MCF 10A (cell line): ENCODE measurements at regions of chr1 and their contacts with region 1.

Region 1: GRCh38 chr1:178532392-178532791 is 19.5 kb downstream of the TEX35 start:
- DNase-seq: peak; percentile 88
- H3K4me3 Mint-ChIP-seq: no peak overlapping the region
- H3K27ac Mint-ChIP-seq: no peak overlapping the region
- H3K4me1 Mint-ChIP-seq: peaks cover 36% of the 10 kb centered on the region
- H3K27me3 Mint-ChIP-seq: peaks cover 7% of the 10 kb centered on the region
- CTCF ChIP-seq: peak; percentile 99

Region 2: GRCh38 chr1:178434360-178434759 is 98.0 kb before region 1 on chr1:
- CTCF ChIA-PET with region 1: no interaction called
- POLR2A ChIA-PET with region 1: no interaction called
- intact Hi-C with region 1: no loop called
- DNase-seq: no peak
- H3K4me3 Mint-ChIP-seq: no peak overlapping the region
- H3K27ac Mint-ChIP-seq: no peak overlapping the region
- H3K4me1 Mint-ChIP-seq: peaks cover 6% of the 10 kb centered on the region
- H3K27me3 Mint-ChIP-seq: no peaks in the 10 kb centered on the region
- CTCF ChIP-seq: no peak

Region 3: DNA sequence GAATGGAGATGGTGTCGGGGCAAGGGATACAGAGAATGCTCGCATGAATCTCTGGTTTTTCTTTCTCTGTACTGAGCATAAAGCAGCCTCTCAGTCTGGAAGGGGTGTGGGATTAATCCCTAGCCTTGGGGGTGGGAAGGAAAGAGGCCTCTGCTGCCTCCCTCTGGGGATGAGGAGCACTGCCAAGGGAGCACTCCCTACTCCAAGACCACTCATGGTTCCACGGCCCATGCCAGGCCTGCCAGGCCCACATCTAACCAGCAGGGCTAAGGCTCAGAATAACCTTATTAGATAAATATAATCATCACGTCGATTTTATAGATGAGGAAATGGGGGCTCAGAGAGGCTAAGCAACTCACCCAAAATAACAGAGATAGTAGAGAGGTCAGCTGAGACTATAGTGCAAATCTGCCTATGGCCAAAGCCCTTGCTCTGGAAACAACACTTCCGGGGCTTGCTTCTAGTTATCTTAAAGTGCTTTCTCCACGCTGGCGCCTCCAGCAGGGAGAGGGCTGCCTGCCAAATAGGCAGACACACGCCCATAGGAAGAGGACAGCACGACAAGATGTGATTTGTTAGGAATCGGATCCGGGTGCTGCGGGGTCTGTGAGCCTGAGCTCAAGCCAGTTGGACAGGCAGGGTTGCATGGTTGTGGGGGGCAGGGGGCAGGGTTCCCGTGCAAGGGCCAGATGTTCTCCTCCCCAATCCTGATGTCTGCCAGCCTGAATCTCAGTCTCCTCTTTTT is 18.9 kb before region 1 on chr1:
- CTCF ChIA-PET with region 1: interaction called, 120 read pairs
- POLR2A ChIA-PET with region 1: no interaction called
- intact Hi-C with region 1: no loop called
- DNase-seq: no peak
- H3K4me3 Mint-ChIP-seq: no peak overlapping the region
- H3K27ac Mint-ChIP-seq: no peak overlapping the region
- H3K4me1 Mint-ChIP-seq: no peaks in the 10 kb centered on the region
- H3K27me3 Mint-ChIP-seq: no peaks in the 10 kb centered on the region
- CTCF ChIP-seq: no peak

Region 4: DNA sequence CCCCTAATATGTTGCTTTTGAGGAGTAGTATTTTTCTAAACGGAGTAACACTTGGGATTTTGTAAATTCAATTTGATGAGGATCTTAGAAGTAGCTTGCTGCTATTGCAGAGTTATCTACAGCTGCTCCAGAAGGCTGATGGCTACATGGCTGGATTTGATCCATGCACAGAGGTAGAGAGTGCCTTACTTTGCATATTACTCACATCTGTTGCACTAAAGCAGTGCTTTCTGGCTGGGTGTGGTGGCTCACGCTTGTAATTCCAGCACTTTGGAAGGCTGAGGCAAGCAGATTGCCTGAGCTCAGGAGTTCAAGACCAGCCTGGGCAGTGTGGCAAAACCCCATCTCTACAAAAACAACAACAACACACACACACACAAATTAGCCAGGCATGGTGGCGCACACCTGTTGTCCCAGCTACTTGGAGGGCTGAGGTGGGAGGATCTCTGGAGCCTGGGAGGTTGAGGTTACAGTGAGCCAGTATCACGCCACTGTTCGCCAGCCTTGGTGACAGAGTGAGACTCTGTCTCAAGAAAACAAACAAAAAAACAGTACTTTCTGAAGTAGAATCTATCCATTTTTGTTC is 217.3 kb after region 1 on chr1:
- CTCF ChIA-PET with region 1: interaction called, 390 read pairs
- POLR2A ChIA-PET with region 1: interaction called, 8 read pairs
- intact Hi-C with region 1: no loop called
- DNase-seq: no peak
- H3K4me3 Mint-ChIP-seq: no peak overlapping the region
- H3K27ac Mint-ChIP-seq: no peak overlapping the region
- H3K4me1 Mint-ChIP-seq: peaks cover 7% of the 10 kb centered on the region
- H3K27me3 Mint-ChIP-seq: no peaks in the 10 kb centered on the region
- CTCF ChIP-seq: no peak

Region 5: DNA sequence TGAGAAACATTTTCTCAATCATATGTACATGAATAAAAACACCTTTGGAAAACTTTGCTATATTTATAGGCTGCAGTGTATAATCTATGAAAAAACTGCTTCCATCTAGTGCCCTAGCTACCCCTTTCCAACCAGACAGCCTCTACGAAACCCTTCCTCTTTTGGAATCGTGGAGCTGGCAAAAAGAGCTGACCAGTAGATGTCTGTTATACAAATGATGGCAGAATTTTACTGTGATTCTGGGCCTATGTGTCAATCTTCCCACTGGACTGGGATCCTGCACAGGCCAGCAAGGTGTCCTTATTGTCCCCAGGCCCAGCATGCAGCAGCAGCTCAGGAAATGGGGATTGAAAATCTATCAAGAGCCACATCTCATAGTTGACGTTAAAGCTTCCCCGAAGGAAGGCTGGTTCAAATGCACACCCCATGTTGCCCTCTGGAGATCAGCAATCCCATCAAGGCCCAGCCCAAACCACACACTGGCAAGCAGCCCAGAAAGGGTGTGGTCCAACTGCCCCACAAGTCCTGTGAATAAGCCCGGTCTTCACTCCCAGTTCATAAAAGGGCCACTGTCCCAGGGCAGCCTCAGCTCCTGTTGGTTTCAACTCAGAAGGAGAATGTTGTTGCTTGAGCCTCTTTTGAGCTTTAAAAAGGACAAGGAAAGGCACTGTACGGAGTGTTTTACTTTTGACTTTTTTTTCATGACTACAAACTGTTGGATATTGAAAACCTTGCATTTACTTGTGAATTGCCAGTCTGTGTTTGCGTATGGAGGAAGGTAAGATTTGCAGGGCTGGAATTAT is 484.6 kb after region 1 on chr1:
- CTCF ChIA-PET with region 1: interaction called, 9 read pairs
- POLR2A ChIA-PET with region 1: interaction called, 12 read pairs
- intact Hi-C with region 1: no loop called
- DNase-seq: peak; percentile 99
- H3K4me3 Mint-ChIP-seq: peak overlapping the region; percentile 26
- H3K27ac Mint-ChIP-seq: peak overlapping the region; percentile 54
- H3K4me1 Mint-ChIP-seq: peaks cover 29% of the 10 kb centered on the region
- H3K27me3 Mint-ChIP-seq: no peaks in the 10 kb centered on the region
- CTCF ChIP-seq: no peak

Region 6: GRCh38 chr1:179365320-179366092 is 833.1 kb after region 1 on chr1 and contains the start of gene AXDND1:
- CTCF ChIA-PET with region 1: interaction called, 3 read pairs
- POLR2A ChIA-PET with region 1: no interaction called
- intact Hi-C with region 1: loop called (anchors 5 kb)
- DNase-seq: peak; percentile 79
- H3K4me3 Mint-ChIP-seq: peak within 1 kb of the TSS; percentile 77
- H3K27ac Mint-ChIP-seq: peak within 1 kb of the TSS; percentile 99
- H3K4me1 Mint-ChIP-seq: peaks cover 5% of the 10 kb centered on the region
- H3K27me3 Mint-ChIP-seq: no peaks in the 10 kb centered on the region
- CTCF ChIP-seq: no peak
- total RNA-seq, gene AXDND1: 1.1 and 1.7 TPM in 2 replicates